ENCODE measurements at regions of chr6 and their contacts with region 1.

Region 1: GRCh38 chr6:41334482-41335040 is 847 bp upstream of the NCR2 start:
- DNase-seq: peak in 1 of 35 experiments; percentile 45
- ATAC-seq: no peak
- H3K4me3 ChIP-seq: no peak overlapping the region
- H3K4me3 Mint-ChIP-seq: peak overlapping the region; percentile 10 to 73 (median 34)
- H3K27ac ChIP-seq: peak overlapping the region; percentile 82
- H3K27ac Mint-ChIP-seq: peak overlapping the region; percentile 77 to 90
- H3K4me1 ChIP-seq: peaks cover 34 to 57% of the 10 kb centered on the region in 2 experiments
- H3K4me1 Mint-ChIP-seq: peaks cover 55 to 58% (median 55%) of the 10 kb centered on the region in 3 donors
- H3K27me3 ChIP-seq: no peaks in the 10 kb centered on the region
- H3K27me3 Mint-ChIP-seq: no peaks in the 10 kb centered on the region

Region 2: DNA sequence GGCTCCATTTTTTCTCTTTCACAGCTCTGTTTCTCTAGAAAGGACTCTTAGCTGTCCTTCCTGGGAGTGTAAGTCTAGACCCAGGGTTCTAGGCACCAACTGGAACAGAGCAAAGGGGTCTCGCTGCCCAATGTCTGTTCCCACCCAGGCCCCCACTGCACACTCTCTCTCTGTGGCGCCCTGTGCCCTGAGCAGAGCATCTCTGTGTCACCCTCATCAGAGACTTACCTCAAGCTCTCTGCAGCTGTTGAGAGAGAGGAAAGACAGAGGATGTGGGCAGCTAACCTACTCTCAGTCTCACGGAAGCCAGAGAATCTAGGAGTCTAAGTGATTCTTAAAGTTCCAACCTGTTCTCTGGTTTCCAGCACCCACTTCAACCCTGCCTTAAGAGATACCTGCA is 10.3 kb after region 1 on chr6:
- CTCF ChIA-PET with region 1: interaction called in 1 of 2 experiments, 14 read pairs
- POLR2A ChIA-PET with region 1: no interaction called
- DNase-seq: peak in 23 of 35 experiments; percentile 9 to 76 (median 33)
- ATAC-seq: peak; percentile 98 to 100 (median 100)
- H3K4me3 ChIP-seq: no peak overlapping the region
- H3K4me3 Mint-ChIP-seq: peak overlapping the region in 2 of 3 donors; percentile 26 to 39
- H3K27ac ChIP-seq: peak overlapping the region; percentile 37
- H3K27ac Mint-ChIP-seq: peak overlapping the region; percentile 86 to 88
- H3K4me1 ChIP-seq: peaks cover 7 to 26% of the 10 kb centered on the region in 2 experiments
- H3K4me1 Mint-ChIP-seq: peaks cover 27 to 37% (median 29%) of the 10 kb centered on the region in 3 donors
- H3K27me3 ChIP-seq: peaks cover 0 to 18% of the 10 kb centered on the region in 2 experiments
- H3K27me3 Mint-ChIP-seq: peaks cover under 1 to 7% of the 10 kb centered on the region in 2 donors